ENCODE measurements at regions of chr12 and their contacts with region 1.

Region 1: GRCh38 chr12:116599285-116600136 is 40.3 kb downstream of the MAP1LC3B2 start:
- DNase-seq: peak; percentile 27
- H3K4me3 ChIP-seq: no peak overlapping the region
- H3K27ac ChIP-seq: no peak overlapping the region
- H3K4me1 ChIP-seq: peaks cover 12% of the 10 kb centered on the region
- H3K27me3 ChIP-seq: no peaks in the 10 kb centered on the region
- CTCF ChIP-seq: peak; percentile 53 to 71

Region 2: GRCh38 chr12:115998119-115998633 is 601.3 kb before region 1 on chr12:
- CTCF ChIA-PET with region 1: no interaction called
- dilution Hi-C with region 1: no loop called
- in situ Hi-C with region 1: loop called in 1 of 2 experiments (anchors 25 kb)
- intact Hi-C with region 1: loop called (anchors 5 kb)
- DNase-seq: peak; percentile 12
- H3K4me3 ChIP-seq: no peak overlapping the region
- H3K27ac ChIP-seq: no peak overlapping the region
- H3K4me1 ChIP-seq: no peaks in the 10 kb centered on the region
- H3K27me3 ChIP-seq: no peaks in the 10 kb centered on the region
- CTCF ChIP-seq: peak; percentile 60 to 70

Region 3: GRCh38 chr12:116066381-116067230 is 532.9 kb before region 1 on chr12:
- CTCF ChIA-PET with region 1: no interaction called
- dilution Hi-C with region 1: no loop called
- in situ Hi-C with region 1: no loop called
- intact Hi-C with region 1: loop called (anchors 5 kb)
- DNase-seq: no peak
- H3K4me3 ChIP-seq: no peak overlapping the region
- H3K27ac ChIP-seq: no peak overlapping the region
- H3K4me1 ChIP-seq: no peaks in the 10 kb centered on the region
- H3K27me3 ChIP-seq: no peaks in the 10 kb centered on the region
- CTCF ChIP-seq: peak; percentile 77 to 83

Region 4: GRCh38 chr12:116236148-116236731 is 363.3 kb before region 1 on chr12:
- CTCF ChIA-PET with region 1: no interaction called
- dilution Hi-C with region 1: no loop called
- in situ Hi-C with region 1: no loop called
- intact Hi-C with region 1: loop called (anchors 5 kb)
- DNase-seq: peak; percentile 40
- H3K4me3 ChIP-seq: no peak overlapping the region
- H3K27ac ChIP-seq: no peak overlapping the region
- H3K4me1 ChIP-seq: peaks cover 6% of the 10 kb centered on the region
- H3K27me3 ChIP-seq: no peaks in the 10 kb centered on the region
- CTCF ChIP-seq: peak; percentile 56 to 82

Region 5: GRCh38 chr12:116426391-116427136 is 172.9 kb before region 1 on chr12:
- CTCF ChIA-PET with region 1: no interaction called
- dilution Hi-C with region 1: no loop called
- in situ Hi-C with region 1: no loop called
- intact Hi-C with region 1: loop called (anchors 2 kb)
- DNase-seq: peak; percentile 91
- H3K4me3 ChIP-seq: no peak overlapping the region
- H3K27ac ChIP-seq: peak overlapping the region; percentile 21
- H3K4me1 ChIP-seq: peaks cover 20% of the 10 kb centered on the region
- H3K27me3 ChIP-seq: no peaks in the 10 kb centered on the region
- CTCF ChIP-seq: peak; percentile 50 to 70

Region 6: GRCh38 chr12:116515684-116516083 is 83.8 kb before region 1 on chr12:
- CTCF ChIA-PET with region 1: no interaction called
- dilution Hi-C with region 1: loop called (anchors 5 kb)
- in situ Hi-C with region 1: no loop called
- intact Hi-C with region 1: no loop called
- DNase-seq: no peak
- H3K4me3 ChIP-seq: no peak overlapping the region
- H3K27ac ChIP-seq: no peak overlapping the region
- H3K4me1 ChIP-seq: peaks cover 29% of the 10 kb centered on the region
- H3K27me3 ChIP-seq: no peaks in the 10 kb centered on the region
- CTCF ChIP-seq: no peak

Region 7: DNA sequence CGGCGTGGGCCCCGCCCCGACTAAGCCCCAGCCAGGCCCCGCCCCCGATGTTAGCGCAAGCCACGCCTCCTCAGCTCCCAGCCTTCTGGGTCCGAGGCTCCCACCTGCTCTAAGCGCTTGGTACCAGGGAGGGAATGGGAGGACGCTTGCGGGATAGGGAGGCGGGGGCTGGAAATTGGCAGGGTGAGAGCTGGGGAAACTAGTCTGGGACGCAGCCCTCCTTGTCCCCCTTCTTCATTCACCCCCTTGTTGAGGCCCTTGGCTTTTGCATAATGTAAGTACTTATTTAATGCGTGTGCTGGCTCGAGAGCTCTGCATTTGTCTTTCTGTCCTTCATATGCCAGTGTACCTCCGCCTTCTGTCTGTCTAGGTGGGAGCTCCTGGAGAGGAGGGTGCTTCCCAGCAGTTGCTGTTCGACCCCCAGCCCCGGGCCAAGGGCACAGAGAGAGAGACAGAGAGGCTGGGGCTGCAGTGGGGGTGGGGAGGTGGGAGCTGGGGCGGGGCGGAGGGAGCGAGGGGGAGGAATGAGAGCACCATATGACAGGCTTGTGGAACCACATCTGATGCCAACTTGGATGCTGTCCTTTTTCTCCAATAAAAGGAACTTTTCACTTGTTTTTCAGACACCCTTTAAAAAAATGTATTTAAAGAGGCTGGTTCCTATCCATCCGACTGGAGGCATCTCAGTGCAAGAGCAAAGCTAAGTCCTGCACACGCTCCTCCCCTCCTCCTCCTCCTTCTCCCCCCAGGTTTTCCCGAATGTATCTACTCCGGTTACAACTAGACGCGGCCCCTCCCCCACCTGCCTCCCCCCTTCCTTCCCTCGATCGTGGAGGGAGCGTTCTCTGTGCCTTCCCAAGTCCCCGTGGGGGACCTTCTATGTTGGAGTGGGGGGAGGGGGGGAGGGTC is 65.9 kb before region 1 on chr12:
- CTCF ChIA-PET with region 1: no interaction called
- dilution Hi-C with region 1: no loop called
- in situ Hi-C with region 1: no loop called
- intact Hi-C with region 1: loop called (anchors 2 kb)
- DNase-seq: no peak
- H3K4me3 ChIP-seq: peak overlapping the region; percentile 32 to 56 (median 39)
- H3K27ac ChIP-seq: no peak overlapping the region
- H3K4me1 ChIP-seq: peaks cover 20% of the 10 kb centered on the region
- H3K27me3 ChIP-seq: no peaks in the 10 kb centered on the region
- CTCF ChIP-seq: peak in 1 of 2 donors; percentile 7

Measured in mammary epithelial cell (primary cell).